CD14-positive monocyte (primary cell): ENCODE measurements at regions of chr19 and their contacts with region 1.

Region 1: GRCh38 chr19:46788262-46788967 is at the start of gene SLC1A5:
- DNase-seq: peak; percentile 91 to 95 (median 92)
- H3K4me3 ChIP-seq: peak within 1 kb of the TSS; percentile 84 to 93 (median 92)
- H3K4me3 Mint-ChIP-seq: peak within 1 kb of the TSS; percentile 95 to 97
- H3K27ac ChIP-seq: peak within 1 kb of the TSS; percentile 29 to 91
- H3K27ac Mint-ChIP-seq: peak within 1 kb of the TSS; percentile 76 to 95 (median 93)
- H3K4me1 ChIP-seq: peaks cover 35 to 50% of the 10 kb centered on the region in 2 donors
- H3K4me1 Mint-ChIP-seq: peaks cover 43% of the 10 kb centered on the region
- H3K27me3 ChIP-seq: no peaks in the 10 kb centered on the region
- H3K27me3 Mint-ChIP-seq: peaks cover 0 to 3% (median 3%) of the 10 kb centered on the region in 3 donors
- CTCF ChIP-seq: no peak
- polyA plus RNA-seq, gene SLC1A5: 34.6 to 64.9 (median 57.3) TPM

Region 2: GRCh38 chr19:46825525-46825971 is 37.1 kb after region 1 on chr19:
- intact Hi-C with region 1: loop called (anchors 2 to 5 kb)
- DNase-seq: peak; percentile 29 to 49 (median 33)
- H3K4me3 ChIP-seq: peak overlapping the region in 1 of 3 experiments; percentile 63
- H3K4me3 Mint-ChIP-seq: peak overlapping the region; percentile 77 to 84
- H3K27ac ChIP-seq: peak overlapping the region; percentile 91 to 93
- H3K27ac Mint-ChIP-seq: peak overlapping the region; percentile 94 to 99 (median 98)
- H3K4me1 ChIP-seq: peaks cover 51 to 58% of the 10 kb centered on the region in 2 donors
- H3K4me1 Mint-ChIP-seq: peaks cover 52% of the 10 kb centered on the region
- H3K27me3 ChIP-seq: no peaks in the 10 kb centered on the region
- H3K27me3 Mint-ChIP-seq: peaks cover 0 to 8% (median 1%) of the 10 kb centered on the region in 3 donors
- CTCF ChIP-seq: no peak

Region 3: DNA sequence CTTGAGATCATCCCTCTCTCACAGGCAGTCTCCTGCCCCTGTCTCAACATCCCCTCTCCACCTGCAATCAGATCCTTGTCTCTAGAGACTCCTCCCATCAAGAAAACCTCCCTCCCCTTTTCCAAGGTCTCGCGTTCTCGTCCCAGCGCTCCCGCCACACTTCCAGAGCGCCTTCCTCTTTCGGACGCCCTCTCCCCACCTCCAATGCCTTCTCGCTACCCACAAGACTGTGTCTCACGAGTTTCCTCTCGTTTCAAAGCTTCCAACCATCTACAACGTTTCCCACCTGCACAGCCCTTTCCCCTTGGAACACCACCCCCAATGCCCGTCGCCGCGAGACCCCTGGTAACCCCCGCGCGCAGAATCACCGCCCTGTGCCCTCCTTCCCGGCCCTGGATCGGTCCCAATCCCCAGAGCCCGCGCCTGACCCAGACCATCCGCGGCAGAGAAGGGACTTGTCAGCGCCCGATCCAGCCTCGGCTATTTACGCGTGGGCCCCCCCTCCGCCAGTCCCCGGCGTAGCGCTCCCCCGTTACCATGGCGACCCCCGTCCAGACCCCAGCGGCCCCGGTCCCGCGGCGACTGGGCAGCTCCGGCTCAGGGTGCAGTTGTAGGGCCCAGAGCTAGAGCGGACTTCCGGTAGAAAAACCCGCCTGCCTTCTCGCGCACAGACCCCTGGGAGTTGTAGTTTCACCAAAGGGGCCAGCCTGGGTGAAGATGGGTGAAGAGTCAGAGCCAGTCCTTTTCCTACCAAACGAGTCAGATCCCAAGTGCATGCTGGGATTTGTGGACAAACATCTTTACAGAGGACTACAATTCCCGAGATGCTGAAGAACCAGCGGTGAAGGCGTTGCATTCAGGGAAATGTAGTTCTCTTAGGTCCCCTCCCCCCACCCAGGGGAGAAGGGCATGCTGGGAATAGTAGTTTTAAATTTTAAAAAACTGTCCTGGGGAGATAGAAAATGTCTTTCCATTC is 62.1 kb after region 1 on chr19 and contains the start of gene AP2S1:
- intact Hi-C with region 1: loop called in 1 of 2 experiments (anchors 5 kb)
- DNase-seq: peak; percentile 96 to 98 (median 97)
- H3K4me3 ChIP-seq: peak within 1 kb of the TSS; percentile 75 to 92 (median 79)
- H3K4me3 Mint-ChIP-seq: peak within 1 kb of the TSS; percentile 95 to 100
- H3K27ac ChIP-seq: peak within 1 kb of the TSS; percentile 60 to 78
- H3K27ac Mint-ChIP-seq: peak within 1 kb of the TSS; percentile 88 to 96 (median 93)
- H3K4me1 ChIP-seq: peaks cover 32 to 40% of the 10 kb centered on the region in 2 donors
- H3K4me1 Mint-ChIP-seq: peaks cover 37% of the 10 kb centered on the region
- H3K27me3 ChIP-seq: no peaks in the 10 kb centered on the region
- H3K27me3 Mint-ChIP-seq: peaks cover 3 to 6% (median 4%) of the 10 kb centered on the region in 3 donors
- CTCF ChIP-seq: no peak
- polyA plus RNA-seq, gene AP2S1: 123 to 194 (median 170) TPM

Region 4: DNA sequence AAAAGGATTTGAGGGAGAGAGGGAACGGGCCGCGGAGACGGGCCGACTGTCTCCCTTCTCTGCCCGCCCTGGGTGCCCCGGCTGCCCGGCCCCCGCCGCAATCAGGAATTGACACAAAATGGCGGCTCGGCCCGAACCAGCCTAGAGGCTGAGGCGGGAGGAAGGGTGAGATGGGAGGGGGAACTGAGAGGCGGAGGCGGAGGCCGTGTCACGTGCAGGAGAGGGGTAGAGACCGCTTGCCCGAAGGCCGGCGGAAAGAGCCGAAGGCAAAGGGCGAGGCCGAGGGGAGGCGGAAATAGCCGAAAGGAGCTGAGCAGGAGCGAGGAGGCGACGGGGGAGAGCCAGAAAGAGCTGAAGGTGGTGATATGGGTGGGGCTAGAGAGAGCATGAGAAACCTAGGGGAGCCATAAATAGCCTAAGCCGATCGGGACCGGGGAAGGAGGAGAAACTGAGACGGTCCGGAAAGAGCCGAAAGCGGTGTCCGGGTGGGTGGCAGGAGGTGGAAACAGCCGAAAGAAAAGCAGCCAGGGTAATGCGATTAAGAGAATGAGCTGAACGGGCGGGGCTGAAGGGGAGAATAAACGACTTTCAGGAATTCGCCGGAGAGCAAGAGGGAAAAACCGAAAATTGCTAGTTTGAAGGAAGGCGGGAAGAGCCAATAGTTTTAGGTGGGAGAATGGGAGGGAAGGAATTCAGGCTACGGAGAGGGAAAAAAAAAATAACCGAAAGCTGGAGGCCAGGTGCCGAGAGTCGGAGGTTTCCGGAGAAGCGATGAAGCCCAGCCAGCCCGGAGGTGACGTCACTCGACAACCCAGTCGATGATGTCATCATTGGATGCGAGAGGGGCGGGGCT is 324.8 kb after region 1 on chr19 and contains the start of gene ZC3H4:
- intact Hi-C with region 1: loop called in 1 of 2 experiments (anchors 5 kb)
- DNase-seq: peak; percentile 99
- H3K4me3 ChIP-seq: peak within 1 kb of the TSS; percentile 93 to 97 (median 94)
- H3K4me3 Mint-ChIP-seq: peak within 1 kb of the TSS; percentile 99
- H3K27ac ChIP-seq: peak within 1 kb of the TSS; percentile 97 to 100
- H3K27ac Mint-ChIP-seq: peak within 1 kb of the TSS; percentile 99 to 100 (median 100)
- H3K4me1 ChIP-seq: peaks cover 25 to 31% of the 10 kb centered on the region in 2 donors
- H3K4me1 Mint-ChIP-seq: peaks cover 33% of the 10 kb centered on the region
- H3K27me3 ChIP-seq: no peaks in the 10 kb centered on the region
- H3K27me3 Mint-ChIP-seq: peaks cover 0 to 15% (median 8%) of the 10 kb centered on the region in 3 donors
- CTCF ChIP-seq: no peak
- polyA plus RNA-seq, gene ZC3H4: 0.24 to 9.9 (median 0.60) TPM